K562 (cell line): ENCODE measurements at regions of chr11 and their contacts with region 1.

Region 1: DNA sequence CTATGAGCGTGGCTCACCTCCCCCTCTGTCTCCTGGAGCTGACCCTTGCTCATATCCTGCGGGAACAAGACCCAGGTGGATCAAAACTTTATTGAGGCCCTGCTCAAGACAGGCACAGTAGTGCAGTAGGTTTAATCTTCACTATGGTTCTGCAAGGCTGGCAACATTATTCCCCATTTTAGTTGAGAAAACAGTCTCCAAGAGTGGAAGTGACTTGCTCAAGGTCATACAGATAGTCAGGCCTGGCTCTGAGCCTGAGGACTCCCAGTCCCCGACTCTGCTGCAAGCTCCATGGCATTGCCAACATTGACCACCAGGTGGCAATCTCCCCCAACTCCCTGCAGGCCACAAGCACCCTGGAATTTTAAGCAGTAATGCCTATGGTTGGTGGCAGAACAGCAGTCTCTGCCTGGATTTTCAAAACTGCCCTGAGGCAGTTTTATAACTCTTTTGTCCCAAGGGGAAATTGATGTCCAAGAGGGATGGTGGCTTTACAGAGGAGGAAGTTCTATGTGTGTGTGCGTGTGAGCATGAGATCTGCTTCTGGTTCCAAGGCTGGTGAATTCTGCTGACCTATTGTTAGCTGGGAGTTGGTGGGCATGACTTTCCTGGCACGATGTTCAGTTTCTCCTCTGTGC is 34.1 kb downstream of the NEU3 start:
- DNase-seq: peak; percentile 85 to 92 (median 89)
- ATAC-seq: peak; percentile 99
- H3K4me3 ChIP-seq: no peak overlapping the region
- H3K27ac ChIP-seq: peak overlapping the region; percentile 13; the same call in 1 of the 3 replicates
- H3K4me1 ChIP-seq: peaks cover 6 to 18% of the 10 kb centered on the region in 2 experiments; a peak in 4 of 5 replicates
- H3K27me3 ChIP-seq: no peaks in the 10 kb centered on the region
- CTCF ChIP-seq: peak; percentile 97 to 99 (median 99)
- EP300 ChIP-seq: peak; percentile 46
- POLR2A ChIP-seq: no peak
- RAD21 ChIP-seq: peak; percentile 98 to 99

Region 2: DNA sequence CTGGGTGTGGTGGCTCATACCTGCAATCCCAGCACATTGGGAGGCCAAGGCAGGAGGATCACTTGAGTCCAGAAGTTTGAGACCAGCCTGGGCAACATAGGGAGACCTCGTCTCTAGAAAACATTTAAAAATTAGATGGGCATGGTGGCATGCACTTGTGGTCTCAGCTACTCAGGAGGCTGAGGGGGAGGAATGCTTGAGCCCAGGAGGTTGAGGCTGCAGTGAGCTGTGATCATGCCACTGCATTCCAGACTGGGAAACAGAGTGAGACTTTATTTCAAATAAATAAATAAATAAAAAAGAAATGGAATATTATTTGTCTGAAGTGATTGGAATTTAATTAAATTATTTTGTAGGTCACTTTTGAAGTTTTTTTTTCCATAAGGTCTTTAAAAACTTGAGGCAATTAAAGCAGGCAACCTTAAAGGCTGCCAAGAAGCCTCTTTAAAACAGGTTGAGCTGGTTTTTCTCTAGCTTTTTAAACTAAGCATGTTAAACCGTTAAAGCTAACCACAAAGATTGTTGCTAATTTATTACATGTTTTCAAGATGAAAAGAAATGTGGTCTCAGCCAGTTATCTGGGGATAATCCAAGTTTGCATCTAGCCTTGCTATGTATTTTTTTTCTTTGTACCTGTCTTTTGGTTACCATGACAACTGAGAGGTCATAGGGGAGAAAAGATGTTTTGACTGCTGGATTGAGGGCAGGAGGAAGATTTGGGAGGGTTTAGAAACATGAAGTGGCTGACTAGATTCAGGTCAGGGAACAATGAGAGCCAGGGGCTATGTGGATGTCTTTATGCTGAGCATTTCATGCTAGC is 605.7 kb before region 1 on chr11:
- CTCF ChIA-PET with region 1: no interaction called
- POLR2A ChIA-PET with region 1: no interaction called
- in situ Hi-C with region 1: no loop called
- intact Hi-C with region 1: no loop called
- DNase-seq: no peak
- ATAC-seq: no peak
- H3K4me3 ChIP-seq: no peak overlapping the region
- H3K27ac ChIP-seq: no peak overlapping the region
- H3K4me1 ChIP-seq: no peaks in the 10 kb centered on the region
- H3K27me3 ChIP-seq: peaks cover 7 to 12% of the 10 kb centered on the region in 2 experiments
- CTCF ChIP-seq: no peak
- EP300 ChIP-seq: no peak
- POLR2A ChIP-seq: no peak
- RAD21 ChIP-seq: no peak

Region 3: GRCh38 chr11:75073459-75074190 is 50.7 kb after region 1 on chr11:
- CTCF ChIA-PET with region 1: interaction called, 3 read pairs
- POLR2A ChIA-PET with region 1: no interaction called
- in situ Hi-C with region 1: no loop called
- intact Hi-C with region 1: loop called (anchors 2 kb)
- DNase-seq: peak in 3 of 4 experiments; percentile 30 to 47 (median 42)
- ATAC-seq: peak; percentile 80
- H3K4me3 ChIP-seq: no peak overlapping the region
- H3K27ac ChIP-seq: no peak overlapping the region
- H3K4me1 ChIP-seq: peaks cover 0 to 20% of the 10 kb centered on the region in 2 experiments; a peak in 3 of 5 replicates
- H3K27me3 ChIP-seq: no peaks in the 10 kb centered on the region
- CTCF ChIP-seq: peak; percentile 52 to 94 (median 59); a peak in 5 of 6 replicates
- EP300 ChIP-seq: no peak
- POLR2A ChIP-seq: no peak
- RAD21 ChIP-seq: peak in 1 of 2 experiments; percentile 46; a peak in 2 of 4 replicates

Region 4: GRCh38 chr11:75132080-75132479 is 109.2 kb after region 1 on chr11:
- CTCF ChIA-PET with region 1: no interaction called
- POLR2A ChIA-PET with region 1: no interaction called
- in situ Hi-C with region 1: no loop called
- intact Hi-C with region 1: no loop called
- DNase-seq: no peak
- ATAC-seq: no peak
- H3K4me3 ChIP-seq: no peak overlapping the region
- H3K27ac ChIP-seq: no peak overlapping the region
- H3K4me1 ChIP-seq: no peaks in the 10 kb centered on the region
- H3K27me3 ChIP-seq: no peaks in the 10 kb centered on the region
- CTCF ChIP-seq: no peak
- EP300 ChIP-seq: no peak
- POLR2A ChIP-seq: no peak
- RAD21 ChIP-seq: no peak

Region 5: DNA sequence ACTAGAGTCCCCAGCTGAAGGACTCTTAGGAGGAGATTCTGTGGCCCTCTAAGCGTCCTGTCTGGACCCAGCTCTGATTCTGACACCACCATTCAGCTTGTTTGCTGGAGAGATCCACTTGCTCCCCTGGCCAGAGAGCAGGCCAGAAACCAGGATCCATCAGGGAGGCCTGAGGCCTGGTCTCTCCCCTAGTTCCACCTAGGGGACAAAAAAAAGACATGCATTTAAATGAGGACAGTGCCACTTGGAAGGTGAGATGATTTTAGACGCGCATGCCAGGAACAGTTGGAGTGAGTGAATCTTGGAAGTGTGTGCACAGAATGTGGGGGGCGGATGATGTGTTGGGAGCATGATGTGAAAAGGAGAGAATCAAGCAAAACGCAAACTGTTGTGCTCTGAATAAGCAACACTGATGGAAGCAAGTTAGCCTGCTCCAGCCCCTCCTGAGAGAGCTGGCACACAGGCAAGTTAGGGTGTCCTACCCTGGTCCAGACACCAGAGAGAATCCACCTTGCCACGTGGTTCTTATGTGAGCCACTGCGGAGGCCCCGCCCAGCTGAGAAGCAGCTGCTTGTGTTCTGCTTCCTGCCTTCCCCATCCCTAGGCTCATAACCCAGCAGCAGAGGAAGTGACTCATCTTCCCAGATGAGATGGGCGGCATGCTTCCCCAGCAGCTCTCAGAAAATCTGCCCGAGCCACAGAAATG is 120.0 kb after region 1 on chr11:
- CTCF ChIA-PET with region 1: interaction called, 3 read pairs
- POLR2A ChIA-PET with region 1: interaction called, 3 read pairs
- in situ Hi-C with region 1: loop called (anchors 5 kb)
- intact Hi-C with region 1: loop called (anchors 2 kb)
- DNase-seq: peak; percentile 84 to 91 (median 88)
- ATAC-seq: peak; percentile 86
- H3K4me3 ChIP-seq: no peak overlapping the region
- H3K27ac ChIP-seq: peak overlapping the region; percentile 33; the same call in 1 of the 3 replicates
- H3K4me1 ChIP-seq: peaks cover 22 to 32% of the 10 kb centered on the region in 2 experiments
- H3K27me3 ChIP-seq: no peaks in the 10 kb centered on the region
- CTCF ChIP-seq: 0 out of 6 replicates have a peak, but pooled peaks of 1 of the 3 experiments have one; percentile 2
- EP300 ChIP-seq: 0 out of 2 replicates have a peak, but pooled peaks have one; percentile 23
- POLR2A ChIP-seq: no peak
- RAD21 ChIP-seq: no peak

Region 6: DNA sequence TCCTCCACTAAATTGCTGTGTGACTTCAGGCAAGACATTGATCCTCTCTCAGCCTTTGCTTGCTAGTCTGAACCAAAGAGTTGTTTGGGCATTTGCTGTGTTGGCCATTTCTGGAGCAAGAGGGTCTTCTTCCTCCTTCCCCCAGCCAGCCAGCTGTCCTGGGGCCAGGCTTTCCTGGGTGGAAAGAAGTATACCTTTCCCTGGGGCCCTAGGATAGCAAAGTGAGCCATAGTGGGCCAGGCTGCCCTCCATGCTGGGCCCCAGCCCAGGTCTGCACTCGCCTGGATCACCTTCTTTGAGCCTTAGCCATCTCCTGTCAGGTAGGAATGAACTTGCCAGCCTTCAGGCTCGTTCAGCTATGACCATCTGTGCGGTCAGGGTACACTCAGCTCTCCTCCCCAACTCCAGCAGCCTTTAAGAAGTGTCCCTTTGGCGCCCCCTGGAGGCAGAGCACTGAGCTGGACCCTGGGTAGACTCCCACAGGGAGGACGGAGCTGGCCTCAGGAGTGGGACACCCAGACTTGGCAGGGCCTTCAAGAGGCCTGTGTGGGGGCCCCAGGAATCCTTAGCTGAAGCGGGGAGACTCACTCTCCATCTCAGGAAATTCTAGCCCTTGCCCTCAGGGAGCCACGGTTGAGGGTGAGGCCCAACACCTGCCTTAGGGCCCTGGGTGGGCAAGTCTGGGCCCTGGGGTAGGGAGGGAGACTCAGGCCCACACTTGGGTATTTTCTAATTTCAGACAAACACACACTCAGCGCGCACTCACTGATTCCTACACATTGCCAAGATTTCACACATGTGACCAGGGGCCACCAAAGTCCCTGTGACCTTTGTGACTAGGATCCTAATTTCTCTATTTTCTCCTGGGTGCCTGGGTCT is 182.0 kb after region 1 on chr11:
- CTCF ChIA-PET with region 1: interaction called, 22 read pairs
- POLR2A ChIA-PET with region 1: interaction called, 3 read pairs
- in situ Hi-C with region 1: loop called (anchors 5 kb)
- intact Hi-C with region 1: loop called (anchors 1 kb)
- DNase-seq: peak; percentile 87 to 92 (median 90)
- ATAC-seq: peak; percentile 99
- H3K4me3 ChIP-seq: no peak overlapping the region
- H3K27ac ChIP-seq: no peak overlapping the region
- H3K4me1 ChIP-seq: peaks cover 6 to 10% of the 10 kb centered on the region in 2 experiments
- H3K27me3 ChIP-seq: no peaks in the 10 kb centered on the region; a peak in 1 of 5 replicates
- CTCF ChIP-seq: peak; percentile 94 to 96 (median 94)
- EP300 ChIP-seq: no peak
- POLR2A ChIP-seq: no peak
- RAD21 ChIP-seq: peak; percentile 92 to 94